ENCODE measurements at regions of chr2 and their contacts with region 1.

Region 1: GRCh38 chr2:2698182-2699120 is 367.4 kb upstream of the MYT1L start:
- DNase-seq: no peak
- H3K4me3 ChIP-seq: no peak overlapping the region
- CTCF ChIP-seq: peak; percentile 24

Region 2: DNA sequence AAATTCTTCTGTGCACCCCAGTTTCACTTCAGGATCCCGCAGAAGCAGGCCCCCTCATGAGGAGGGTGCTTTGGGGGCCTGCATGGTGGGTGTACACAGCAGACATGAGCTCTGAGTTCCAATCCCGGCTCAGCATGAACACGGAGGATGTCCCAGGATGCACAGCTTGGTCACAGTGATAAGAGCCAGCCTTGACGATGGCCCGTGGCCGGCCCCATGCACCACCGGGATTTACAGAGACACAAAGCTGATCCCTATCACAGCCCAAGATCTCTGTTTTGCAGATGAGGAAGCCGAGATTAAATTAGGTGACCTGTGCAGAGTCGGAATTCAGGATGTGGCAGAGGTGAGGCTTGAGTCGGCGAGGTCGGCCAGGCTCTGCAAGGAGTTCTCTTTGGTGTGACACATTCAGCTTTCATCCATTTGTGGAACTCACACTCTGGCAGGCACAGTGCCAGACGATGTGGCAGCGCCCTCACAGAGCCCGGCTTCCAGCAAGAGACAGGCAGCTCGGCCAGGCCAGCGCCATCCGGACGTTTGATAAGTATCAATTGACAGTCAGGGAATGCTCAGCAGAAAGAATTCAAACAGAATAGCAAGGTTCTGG is 89.0 kb after region 1 on chr2:
- in situ Hi-C with region 1: loop called (anchors 5 kb)
- DNase-seq: no peak
- H3K4me3 ChIP-seq: no peak overlapping the region
- CTCF ChIP-seq: no peak